Sciatic nerve (tissue), 2 donors: ENCODE measurements at regions of chr1 and their contacts with region 1.

Region 1: DNA sequence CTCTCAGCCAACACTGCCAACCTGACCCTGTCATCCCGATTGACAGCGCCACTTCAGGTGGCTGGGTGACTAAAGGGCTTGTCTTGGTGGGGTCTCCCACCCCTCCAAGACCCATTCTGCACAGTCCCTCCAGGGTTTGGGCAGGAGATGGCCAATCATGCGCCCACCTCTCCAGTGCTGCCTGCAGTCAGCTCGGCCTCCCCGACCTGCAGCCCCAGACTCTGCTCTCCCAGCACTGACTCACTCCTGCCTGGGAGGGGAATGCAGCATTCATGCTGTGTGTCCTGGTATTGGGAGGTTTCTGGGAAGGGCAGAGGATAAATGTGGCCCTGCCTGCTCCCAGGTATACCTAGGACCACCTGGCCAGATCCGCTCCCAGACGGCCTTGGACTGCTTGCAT is 9.7 kb downstream of the TMEM81 start:
- DNase-seq: no peak
- ATAC-seq: no peak

Region 2: DNA sequence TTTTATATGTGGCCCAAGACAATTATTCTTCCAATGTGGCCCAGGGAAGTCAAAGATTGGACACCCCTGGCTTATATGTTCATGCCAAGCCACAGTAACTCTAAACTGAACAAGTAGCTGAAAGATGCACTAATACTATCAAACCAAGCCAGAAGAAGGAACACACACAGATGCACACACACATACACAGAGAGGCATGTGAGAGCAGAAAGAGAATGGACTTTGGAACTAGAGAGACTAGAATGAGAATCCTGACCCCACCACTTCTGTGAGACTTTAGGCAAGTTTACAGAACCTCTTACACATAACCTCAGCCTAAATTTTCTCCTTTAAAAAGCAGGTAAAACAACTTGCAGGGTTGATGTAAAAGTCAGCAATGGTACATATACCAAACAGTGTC is 20.9 kb after region 1 on chr1:
- intact Hi-C with region 1: loop called (anchors 2 kb)
- DNase-seq: no peak
- ATAC-seq: no peak

Region 3: DNA sequence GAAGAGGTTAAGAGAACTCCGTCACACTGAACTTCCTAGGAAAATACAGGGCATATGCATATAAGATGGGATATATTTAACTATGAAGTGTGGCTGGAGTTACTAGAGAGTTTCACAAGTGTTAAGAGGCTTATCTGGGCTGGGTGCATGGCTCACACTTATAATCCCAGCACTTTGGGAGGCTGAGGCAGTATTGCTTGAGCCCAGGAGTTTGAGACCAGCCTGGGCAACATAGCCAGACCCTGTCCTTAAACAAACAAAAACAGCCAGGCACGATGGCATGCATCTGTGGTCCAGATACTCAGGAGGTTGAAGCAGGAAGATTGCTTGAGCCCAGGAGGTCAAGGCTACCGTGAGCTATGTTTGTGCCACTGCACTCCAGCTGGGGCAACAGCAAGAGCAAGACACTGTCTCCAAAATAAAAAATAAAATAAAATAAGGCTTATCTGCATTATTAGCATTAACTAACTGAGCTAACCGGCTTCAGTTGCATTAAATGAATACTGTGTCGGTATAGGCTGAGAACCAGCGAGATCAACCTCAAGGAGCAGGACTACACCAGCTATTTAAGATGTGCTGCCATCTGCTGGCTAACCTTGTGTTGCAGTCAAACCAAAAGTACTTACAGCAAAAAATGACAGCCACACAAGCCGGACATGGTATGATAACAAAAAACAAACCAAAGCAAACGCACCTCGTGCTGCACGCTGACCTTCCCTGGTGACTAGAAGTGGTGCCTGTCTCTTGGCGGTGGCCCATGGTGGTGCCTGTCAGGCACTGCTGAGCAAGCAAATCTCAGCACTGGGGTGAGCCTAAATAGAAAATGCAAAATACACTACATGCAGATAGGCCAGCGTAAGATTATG is 67.0 kb after region 1 on chr1:
- intact Hi-C with region 1: no loop called
- DNase-seq: peak; percentile 87
- ATAC-seq: peak; percentile 86